Activated naive CD4-positive, alpha-beta T cell treated with anti-CD3 and anti-CD28 coated beads, Interleukin-2, amount 10 ng/mL, durations not matched to agents 7 days and 5 days (primary cell): ENCODE measurements at regions of chr14 and their contacts with region 1.

Region 1: DNA sequence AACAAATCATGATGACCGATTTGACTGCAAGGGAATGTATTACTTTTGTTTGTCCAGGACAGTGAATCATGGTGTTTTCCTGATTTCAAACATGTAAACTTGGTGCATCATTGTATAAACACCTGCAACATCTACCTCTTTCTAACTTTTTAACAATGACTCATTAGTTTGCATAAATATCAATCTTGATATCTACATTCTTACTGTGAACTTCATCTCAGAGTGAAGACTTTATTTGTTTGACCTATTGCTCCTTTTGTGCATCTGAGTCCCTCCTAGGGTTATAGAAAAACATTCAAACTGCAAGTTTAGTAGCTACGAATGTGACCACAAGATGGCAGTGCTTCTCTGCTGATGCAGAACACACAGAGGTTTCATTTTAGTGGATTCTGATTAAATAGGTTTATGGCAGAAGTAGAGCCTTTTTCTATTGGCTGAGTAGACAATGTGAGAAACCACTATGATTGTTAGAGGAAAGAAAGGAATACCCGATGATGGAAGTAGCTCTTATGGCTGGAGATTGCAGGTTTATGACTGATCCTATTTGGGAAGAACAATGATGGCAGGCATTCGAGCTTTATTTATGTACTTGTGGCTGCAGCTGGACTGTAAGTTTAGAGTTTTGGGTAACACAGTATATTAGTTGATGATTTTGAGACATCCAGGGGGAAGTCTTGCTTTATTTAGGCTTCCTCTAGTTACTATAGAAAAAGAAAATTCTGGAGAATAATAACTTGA is 244.2 kb upstream of the OR4E1 start:
- DNase-seq: peak; percentile 77
- H3K4me3 Mint-ChIP-seq: peak overlapping the region; percentile 71
- H3K27ac Mint-ChIP-seq: peak overlapping the region; percentile 81
- H3K4me1 Mint-ChIP-seq: peaks cover 78% of the 10 kb centered on the region
- H3K27me3 Mint-ChIP-seq: no peaks in the 10 kb centered on the region

Region 2: GRCh38 chr14:21723431-21724045 is 194.3 kb before region 1 on chr14:
- CTCF ChIA-PET with region 1: no interaction called
- DNase-seq: peak; percentile 69
- H3K4me3 Mint-ChIP-seq: peak overlapping the region; percentile 73
- H3K27ac Mint-ChIP-seq: peak overlapping the region; percentile 81
- H3K4me1 Mint-ChIP-seq: peaks cover 2% of the 10 kb centered on the region
- H3K27me3 Mint-ChIP-seq: peaks cover 17% of the 10 kb centered on the region

Region 3: GRCh38 chr14:21894003-21894897 is 23.6 kb before region 1 on chr14:
- CTCF ChIA-PET with region 1: interaction called, 14 read pairs
- DNase-seq: peak; percentile 75
- H3K4me3 Mint-ChIP-seq: peak overlapping the region; percentile 74
- H3K27ac Mint-ChIP-seq: peak overlapping the region; percentile 94
- H3K4me1 Mint-ChIP-seq: peaks cover 22% of the 10 kb centered on the region
- H3K27me3 Mint-ChIP-seq: peaks cover 21% of the 10 kb centered on the region

Region 4: DNA sequence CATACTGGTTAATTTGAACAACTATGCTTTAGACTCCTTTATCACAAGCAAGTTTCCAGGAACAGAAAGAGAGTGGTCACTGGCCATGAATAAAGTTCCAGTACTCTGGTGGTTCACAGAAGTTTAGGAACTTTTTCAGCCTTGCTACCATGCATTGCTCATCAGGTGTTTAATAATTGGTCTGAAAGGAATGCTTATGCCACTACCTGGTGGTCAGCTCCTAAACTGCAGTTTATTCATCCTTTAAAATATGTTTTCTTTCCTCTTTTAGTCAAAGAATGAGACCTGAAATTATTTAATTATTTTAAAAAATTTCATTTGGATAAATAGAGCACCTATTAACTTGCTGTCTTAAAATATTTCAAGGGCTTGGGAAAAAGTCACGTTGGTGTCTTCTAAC is 15.8 kb after region 1 on chr14:
- CTCF ChIA-PET with region 1: interaction called, 22 read pairs
- DNase-seq: no peak
- H3K4me3 Mint-ChIP-seq: no peak overlapping the region
- H3K27ac Mint-ChIP-seq: no peak overlapping the region
- H3K4me1 Mint-ChIP-seq: peaks cover 5% of the 10 kb centered on the region
- H3K27me3 Mint-ChIP-seq: no peaks in the 10 kb centered on the region

Region 5: DNA sequence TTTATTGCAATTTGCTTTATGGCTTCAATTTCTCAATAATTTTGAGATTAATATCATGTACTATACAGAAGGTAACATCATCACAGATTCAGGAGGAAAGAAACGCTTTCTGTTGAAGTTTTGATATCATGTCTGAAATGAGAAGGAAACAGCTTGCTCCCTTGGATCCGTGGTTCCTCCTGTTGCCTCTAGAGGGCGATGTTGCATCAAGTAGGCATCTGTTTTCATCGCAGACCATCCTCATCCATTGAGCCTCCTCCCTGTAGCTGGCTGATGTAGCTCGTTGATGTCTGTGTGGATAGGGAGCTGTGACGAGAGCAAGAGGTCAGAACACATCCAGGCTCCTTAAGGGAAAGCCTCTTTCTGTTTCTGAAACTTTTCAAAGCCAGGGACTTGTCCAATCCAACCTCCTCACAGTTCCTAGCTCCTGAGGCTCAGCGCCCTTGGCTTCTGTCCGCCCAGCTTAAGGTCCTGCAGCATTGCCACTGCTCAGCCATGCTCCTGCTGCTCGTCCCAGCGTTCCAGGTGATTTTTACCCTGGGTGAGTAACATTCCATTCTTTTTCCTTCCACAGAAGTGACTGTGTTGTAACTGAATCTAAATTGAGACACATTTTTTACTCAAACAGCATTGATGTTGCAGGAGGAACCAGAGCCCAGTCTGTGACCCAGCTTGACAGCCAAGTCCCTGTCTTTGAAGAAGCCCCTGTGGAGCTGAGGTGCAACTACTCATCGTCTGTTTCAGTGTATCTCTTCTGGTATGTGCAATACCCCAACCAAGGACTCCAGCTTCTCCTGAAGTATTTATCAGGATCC is 60.5 kb after region 1 on chr14:
- CTCF ChIA-PET with region 1: interaction called, 32 read pairs
- DNase-seq: peak; percentile 72
- H3K4me3 Mint-ChIP-seq: peak overlapping the region; percentile 75
- H3K27ac Mint-ChIP-seq: peak overlapping the region; percentile 88
- H3K4me1 Mint-ChIP-seq: peaks cover 31% of the 10 kb centered on the region
- H3K27me3 Mint-ChIP-seq: peaks cover 12% of the 10 kb centered on the region

Region 6: DNA sequence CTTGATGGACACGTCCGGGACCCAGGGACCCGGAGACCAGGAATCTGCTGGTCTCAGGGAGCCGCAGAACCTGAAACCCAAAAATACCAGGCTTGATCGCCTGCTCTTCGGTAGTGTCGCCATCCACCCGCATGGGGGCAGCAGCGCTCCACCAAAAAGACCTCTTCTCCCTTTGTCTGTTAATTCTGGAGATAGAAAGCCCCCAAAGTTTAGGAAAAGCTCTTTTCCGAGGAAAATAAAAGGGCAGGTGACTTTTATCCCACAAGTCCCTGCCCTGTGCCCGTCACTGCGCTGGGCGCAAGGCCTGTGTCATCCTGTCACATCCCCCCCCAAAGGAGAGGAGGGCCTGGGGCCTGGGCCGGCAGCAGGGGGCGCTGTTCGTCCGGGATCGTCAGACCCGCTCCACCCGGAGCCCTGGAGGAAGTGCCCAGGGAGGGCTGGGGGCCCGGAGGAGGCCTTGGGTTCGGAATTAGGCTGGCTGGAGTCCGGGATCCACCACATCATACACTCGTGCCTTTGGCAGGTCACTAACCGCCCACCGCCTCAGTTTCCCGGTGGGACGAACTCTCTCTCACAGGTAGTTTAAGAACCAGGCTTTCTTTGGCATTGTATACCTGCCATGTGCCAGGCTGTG is 639.2 kb after region 1 on chr14:
- CTCF ChIA-PET with region 1: interaction called, 11 read pairs
- DNase-seq: peak; percentile 93
- H3K4me3 Mint-ChIP-seq: peak overlapping the region; percentile 80
- H3K27ac Mint-ChIP-seq: peak overlapping the region; percentile 97
- H3K4me1 Mint-ChIP-seq: peaks cover 92% of the 10 kb centered on the region
- H3K27me3 Mint-ChIP-seq: peaks cover 8% of the 10 kb centered on the region